ENCODE measurements at regions of chr5 and their contacts with region 1.

Region 1: GRCh38 chr5:98773464-98774191 is at the start of gene RGMB:
- DNase-seq: peak; percentile 95
- ATAC-seq: peak; percentile 88
- H3K4me3 ChIP-seq: peak within 1 kb of the TSS; percentile 78 to 91 (median 80)
- H3K27ac ChIP-seq: peak within 1 kb of the TSS; percentile 78
- H3K4me1 ChIP-seq: peaks cover 52% of the 10 kb centered on the region
- H3K27me3 ChIP-seq: peaks cover 0 to under 1% of the 10 kb centered on the region in 2 experiments; a peak in 1 of 5 replicates
- CTCF ChIP-seq: no peak
- EP300 ChIP-seq: no peak
- POLR2A ChIP-seq: peak; percentile 64 to 87; a peak in 3 of 4 replicates
- RAD21 ChIP-seq: peak; percentile 32; the same call in 1 of the 2 replicates
- total RNA-seq, gene RGMB: 2.3 and 3.8 TPM in 2 replicates

Region 2: DNA sequence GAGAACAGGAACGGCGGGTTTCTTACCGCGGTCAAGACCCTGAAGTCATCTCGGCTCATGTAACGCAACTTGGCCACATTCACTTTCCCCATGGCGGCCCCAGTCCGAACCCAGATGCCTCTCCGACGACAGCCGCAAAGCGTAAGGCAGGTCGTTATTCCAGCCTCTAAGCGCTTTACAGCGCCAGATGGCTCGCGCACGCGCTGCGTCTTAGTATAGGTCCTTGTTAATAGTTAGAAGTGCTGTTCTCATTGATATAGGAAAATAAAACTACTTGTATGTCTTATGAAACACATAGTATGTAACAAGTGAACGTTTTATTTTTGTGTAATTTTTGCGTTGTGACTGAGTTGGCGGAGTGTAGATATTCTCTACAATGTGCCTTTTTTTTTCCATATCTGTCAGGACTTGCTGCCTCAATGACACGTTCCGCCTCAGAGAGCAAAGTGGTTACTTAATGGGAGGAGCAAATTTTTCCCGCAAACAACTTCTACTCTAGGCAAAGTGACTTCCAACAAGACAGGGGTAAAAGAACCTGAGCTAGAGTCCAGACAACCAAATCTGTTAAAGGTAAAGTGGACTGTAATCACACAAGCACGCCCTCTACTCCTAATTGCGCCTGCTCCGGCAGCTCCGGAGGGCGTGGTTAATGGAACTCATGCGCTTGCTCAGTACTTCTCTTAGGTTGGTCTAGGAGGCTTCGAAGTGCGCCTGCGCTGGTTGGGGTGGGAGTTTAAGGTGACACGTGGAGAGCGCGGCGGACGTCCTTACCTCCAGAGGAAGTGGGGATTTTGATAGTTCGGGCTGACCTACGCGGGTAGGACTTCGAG is 1590.3 kb before region 1 on chr5 and contains the start of gene RIOK2:
- CTCF ChIA-PET with region 1: no interaction called
- POLR2A ChIA-PET with region 1: no interaction called
- in situ Hi-C with region 1: no loop called
- intact Hi-C with region 1: loop called (anchors 2 kb)
- DNase-seq: peak; percentile 94
- ATAC-seq: peak; percentile 97
- H3K4me3 ChIP-seq: peak within 1 kb of the TSS; percentile 85 to 99 (median 89)
- H3K27ac ChIP-seq: peak within 1 kb of the TSS; percentile 97
- H3K4me1 ChIP-seq: peaks cover 42% of the 10 kb centered on the region
- H3K27me3 ChIP-seq: no peaks in the 10 kb centered on the region; a peak in 1 of 5 replicates
- CTCF ChIP-seq: no peak; the same call in 1 of the 2 replicates
- EP300 ChIP-seq: peak in 1 of 2 experiments; percentile 100; a peak in 1 of 4 replicates
- POLR2A ChIP-seq: peak; percentile 66 to 80
- RAD21 ChIP-seq: no peak
- total RNA-seq, gene RIOK2: 46.6 and 74.0 TPM in 2 replicates

Region 3: GRCh38 chr5:97297063-97297703 is 1476.4 kb before region 1 on chr5:
- CTCF ChIA-PET with region 1: no interaction called
- POLR2A ChIA-PET with region 1: no interaction called
- in situ Hi-C with region 1: no loop called
- intact Hi-C with region 1: loop called (anchors 10 kb)
- DNase-seq: peak; percentile 70
- ATAC-seq: peak; percentile 100
- H3K4me3 ChIP-seq: no peak overlapping the region
- H3K27ac ChIP-seq: no peak overlapping the region
- H3K4me1 ChIP-seq: no peaks in the 10 kb centered on the region
- H3K27me3 ChIP-seq: no peaks in the 10 kb centered on the region
- CTCF ChIP-seq: peak; percentile 70
- EP300 ChIP-seq: no peak
- POLR2A ChIP-seq: no peak
- RAD21 ChIP-seq: peak; percentile 75

Region 4: GRCh38 chr5:98847054-98847453 is 73.4 kb after region 1 on chr5:
- CTCF ChIA-PET with region 1: no interaction called
- POLR2A ChIA-PET with region 1: no interaction called
- in situ Hi-C with region 1: no loop called
- intact Hi-C with region 1: no loop called
- DNase-seq: no peak
- ATAC-seq: no peak
- H3K4me3 ChIP-seq: no peak overlapping the region
- H3K27ac ChIP-seq: no peak overlapping the region
- H3K4me1 ChIP-seq: peaks cover 13% of the 10 kb centered on the region
- H3K27me3 ChIP-seq: no peaks in the 10 kb centered on the region; a peak in 1 of 5 replicates
- CTCF ChIP-seq: no peak
- EP300 ChIP-seq: no peak
- POLR2A ChIP-seq: no peak
- RAD21 ChIP-seq: no peak

Region 5: GRCh38 chr5:99019812-99020697 is 246.4 kb after region 1 on chr5:
- CTCF ChIA-PET with region 1: no interaction called
- POLR2A ChIA-PET with region 1: no interaction called
- in situ Hi-C with region 1: loop called (anchors 10 kb)
- intact Hi-C with region 1: no loop called
- DNase-seq: peak; percentile 59
- ATAC-seq: peak; percentile 67
- H3K4me3 ChIP-seq: no peak overlapping the region
- H3K27ac ChIP-seq: peak overlapping the region; percentile 14
- H3K4me1 ChIP-seq: peaks cover 41% of the 10 kb centered on the region
- H3K27me3 ChIP-seq: no peaks in the 10 kb centered on the region
- CTCF ChIP-seq: no peak
- EP300 ChIP-seq: no peak; a peak in 1 of 4 replicates
- POLR2A ChIP-seq: no peak
- RAD21 ChIP-seq: no peak

Region 6: GRCh38 chr5:99037668-99038067 is 264.0 kb after region 1 on chr5:
- CTCF ChIA-PET with region 1: no interaction called
- POLR2A ChIA-PET with region 1: no interaction called
- in situ Hi-C with region 1: no loop called
- intact Hi-C with region 1: loop called (anchors 5 kb)
- DNase-seq: peak; percentile 45
- ATAC-seq: peak; percentile 81
- H3K4me3 ChIP-seq: peak overlapping the region in 2 of 3 experiments; percentile 20 to 46; a peak in 4 of 6 replicates
- H3K27ac ChIP-seq: no peak overlapping the region
- H3K4me1 ChIP-seq: peaks cover 42% of the 10 kb centered on the region
- H3K27me3 ChIP-seq: no peaks in the 10 kb centered on the region
- CTCF ChIP-seq: no peak
- EP300 ChIP-seq: no peak
- POLR2A ChIP-seq: no peak
- RAD21 ChIP-seq: no peak

Measured in HepG2 (cell line).